HEK293T (cell line): ENCODE measurements at regions of chr6 and their contacts with region 1.

Region 1: GRCh38 chr6:49606696-49607390 is 29.8 kb downstream of the RHAG start:
- DNase-seq: peak; percentile 76

Region 2: DNA sequence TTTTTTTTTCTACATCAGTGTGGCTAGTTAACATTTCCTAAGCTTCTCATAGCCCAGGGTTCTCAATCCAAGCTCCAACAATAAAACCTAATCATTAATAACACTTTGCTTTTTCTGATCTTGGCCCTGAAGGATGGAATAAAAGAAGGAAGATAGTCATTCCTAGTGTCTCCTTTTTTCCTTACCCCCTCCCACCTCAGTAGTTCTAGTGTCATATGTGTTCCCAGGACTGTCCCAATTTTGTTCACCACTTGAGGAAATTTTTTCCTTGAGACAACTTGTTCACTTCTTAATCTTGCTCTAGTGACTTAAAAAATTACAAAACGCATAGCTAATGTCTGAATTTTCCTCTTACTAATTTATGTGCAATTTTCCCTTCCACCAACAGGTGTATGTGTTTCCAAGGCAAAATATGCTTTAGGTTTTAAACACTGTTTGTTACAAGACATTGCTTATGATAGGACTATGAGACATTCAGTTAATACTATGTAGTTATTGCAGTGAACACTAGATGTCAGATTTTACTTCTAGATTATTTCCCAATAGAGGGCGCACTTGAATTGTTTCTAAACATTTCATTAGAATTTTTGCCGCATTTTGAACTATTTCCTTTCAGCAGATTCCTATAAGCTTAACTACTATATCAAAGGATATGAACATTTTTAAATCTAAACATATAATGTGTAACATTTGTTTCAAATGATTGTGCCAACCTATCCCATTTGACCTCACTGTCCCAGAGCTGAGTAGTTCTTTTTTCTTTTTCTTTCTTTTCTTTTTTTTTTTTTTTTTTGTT is 74.9 kb before region 1 on chr6:
- CTCF ChIA-PET with region 1: interaction called, 31 read pairs
- POLR2A ChIA-PET with region 1: no interaction called
- DNase-seq: peak; percentile 46

Region 3: DNA sequence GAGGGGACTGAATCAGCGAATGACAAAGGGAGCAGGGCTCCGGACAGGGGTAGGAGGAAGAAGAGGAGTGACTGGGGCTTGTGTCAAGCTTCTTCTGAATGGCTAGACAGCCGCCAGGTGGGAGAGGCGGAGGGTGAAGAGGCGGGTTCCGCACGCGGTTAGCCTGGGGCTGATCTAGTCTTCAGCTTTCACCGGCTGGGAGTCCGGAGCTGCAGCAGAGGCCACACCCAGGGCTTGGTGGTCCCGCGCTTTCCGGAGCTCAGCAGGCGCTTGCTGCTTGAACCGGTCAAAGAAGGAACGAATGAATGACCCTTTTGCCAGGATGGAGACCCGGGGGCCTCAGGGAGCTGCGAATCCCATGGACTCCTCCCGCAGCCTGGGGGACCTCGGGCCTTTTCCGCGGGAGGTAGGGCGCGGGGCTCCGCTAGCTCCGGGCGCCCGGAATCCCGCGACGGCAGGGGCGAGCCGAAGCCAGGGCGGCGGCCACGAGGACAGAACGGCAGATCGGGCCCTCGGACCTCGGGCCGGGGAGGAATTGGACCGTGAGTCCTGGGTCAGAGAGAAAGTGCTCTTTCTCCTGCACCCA is 56.3 kb before region 1 on chr6 and contains the start of gene C6orf141:
- CTCF ChIA-PET with region 1: interaction called, 5 read pairs
- POLR2A ChIA-PET with region 1: interaction called, 10 read pairs
- DNase-seq: peak; percentile 21

Region 4: DNA sequence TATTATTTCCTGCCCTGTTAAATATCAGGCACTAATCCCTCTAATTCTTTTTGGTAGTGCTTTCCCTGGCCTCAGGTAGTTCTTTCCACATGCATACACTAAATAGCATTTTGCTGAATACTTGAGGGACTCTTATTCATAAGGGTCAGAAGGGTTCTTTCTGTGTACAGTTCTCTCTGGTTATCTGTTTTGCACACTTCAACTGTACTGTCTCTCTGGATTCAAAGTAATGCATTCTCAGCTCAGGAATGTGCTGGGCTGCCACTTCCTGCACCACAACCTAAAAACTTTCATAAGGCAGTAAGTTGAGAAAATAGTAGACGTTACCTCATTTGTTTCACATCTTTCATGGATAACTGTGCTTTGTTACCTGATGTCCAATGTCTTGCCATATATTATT is 24.3 kb before region 1 on chr6:
- CTCF ChIA-PET with region 1: no interaction called
- POLR2A ChIA-PET with region 1: no interaction called
- DNase-seq: no peak